ENCODE measurements at regions of chr4 and their contacts with region 1.

Region 1: DNA sequence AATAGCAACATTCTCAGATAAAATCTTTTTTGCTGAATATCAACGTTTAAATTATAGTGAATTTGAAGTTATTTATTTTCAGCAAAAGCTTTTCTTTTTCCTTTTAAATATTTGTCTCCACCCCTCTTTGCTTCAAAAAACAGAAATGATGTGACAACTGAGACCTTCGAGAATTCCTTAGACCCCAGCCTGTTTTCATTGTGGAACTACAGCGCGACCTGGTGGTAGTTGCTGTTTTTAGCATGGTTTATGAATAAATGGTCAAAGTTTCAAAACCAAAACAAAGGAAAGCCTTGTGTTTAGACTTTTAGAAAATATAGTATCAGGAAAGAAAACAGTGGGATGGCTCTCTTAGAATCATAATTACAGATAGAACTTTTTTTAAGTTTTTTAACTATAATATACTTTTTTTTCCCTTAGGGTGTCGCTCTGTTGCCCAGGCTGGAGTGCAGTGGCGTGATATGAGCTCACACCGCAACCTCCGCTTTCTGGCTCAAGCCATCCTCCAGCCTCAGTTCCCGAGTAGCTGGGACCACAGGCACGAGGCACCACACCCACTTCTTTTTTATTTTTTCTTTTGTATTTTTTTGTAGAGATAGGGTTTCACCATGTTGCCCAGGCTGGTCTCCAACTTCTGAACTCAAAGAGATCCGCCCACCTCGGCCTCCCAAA is 26.8 kb upstream of the TMEM184C start:
- DNase-seq: no peak
- H3K4me3 ChIP-seq: no peak overlapping the region
- H3K27ac ChIP-seq: no peak overlapping the region
- H3K4me1 ChIP-seq: peaks cover 0 to 4% (median 0%) of the 10 kb centered on the region in 4 donors
- H3K27me3 ChIP-seq: no peaks in the 10 kb centered on the region
- CTCF ChIP-seq: peak; percentile 40 to 72 (median 64)
- EP300 ChIP-seq: no peak
- POLR2A ChIP-seq: no peak

Region 2: GRCh38 chr4:147103403-147103946 is 486.9 kb before region 1 on chr4:
- intact Hi-C with region 1: loop called (anchors 10 kb)
- DNase-seq: peak; percentile 71
- H3K4me3 ChIP-seq: no peak overlapping the region
- H3K27ac ChIP-seq: peak overlapping the region in 3 of 4 donors; percentile 31 to 68 (median 59)
- H3K4me1 ChIP-seq: peaks cover 0 to 8% (median 7%) of the 10 kb centered on the region in 4 donors
- H3K27me3 ChIP-seq: no peaks in the 10 kb centered on the region
- CTCF ChIP-seq: no peak
- EP300 ChIP-seq: no peak
- POLR2A ChIP-seq: no peak

Region 3: DNA sequence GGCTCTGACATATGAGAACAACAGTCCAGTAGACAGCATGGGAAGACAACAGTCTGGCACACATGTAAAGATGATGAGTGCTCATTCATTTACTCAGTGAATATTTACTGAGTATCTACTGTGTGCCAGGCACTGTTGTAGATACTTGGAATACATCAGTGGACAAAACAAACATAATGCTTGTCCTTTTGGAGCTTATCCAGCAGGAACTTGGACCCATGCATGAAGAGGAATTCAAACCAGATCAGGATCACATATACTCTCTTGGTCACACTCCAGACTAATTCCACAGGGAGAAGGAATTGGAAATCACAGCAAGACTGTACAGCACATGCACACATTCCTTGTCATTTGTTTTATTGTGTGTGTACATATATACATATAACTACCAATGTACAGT is 427.1 kb before region 1 on chr4:
- intact Hi-C with region 1: loop called (anchors 2 kb)
- DNase-seq: no peak
- H3K4me3 ChIP-seq: no peak overlapping the region
- H3K27ac ChIP-seq: no peak overlapping the region
- H3K4me1 ChIP-seq: peaks cover 0 to 3% (median 2%) of the 10 kb centered on the region in 4 donors
- H3K27me3 ChIP-seq: no peaks in the 10 kb centered on the region
- CTCF ChIP-seq: no peak
- EP300 ChIP-seq: no peak
- POLR2A ChIP-seq: no peak

Region 4: GRCh38 chr4:147518846-147519767 is 71.3 kb before region 1 on chr4:
- intact Hi-C with region 1: loop called (anchors 2 kb)
- DNase-seq: no peak
- H3K4me3 ChIP-seq: no peak overlapping the region
- H3K27ac ChIP-seq: no peak overlapping the region
- H3K4me1 ChIP-seq: peaks cover 0 to under 1% (median 0%) of the 10 kb centered on the region in 4 donors
- H3K27me3 ChIP-seq: no peaks in the 10 kb centered on the region
- CTCF ChIP-seq: peak; percentile 11 to 81 (median 62)
- EP300 ChIP-seq: no peak
- POLR2A ChIP-seq: no peak

Region 5: GRCh38 chr4:147550626-147551250 is 39.6 kb before region 1 on chr4:
- intact Hi-C with region 1: no loop called
- DNase-seq: no peak
- H3K4me3 ChIP-seq: peak overlapping the region in 1 of 4 donors; percentile 4
- H3K27ac ChIP-seq: no peak overlapping the region
- H3K4me1 ChIP-seq: peaks cover 0 to 10% (median 3%) of the 10 kb centered on the region in 4 donors
- H3K27me3 ChIP-seq: no peaks in the 10 kb centered on the region
- CTCF ChIP-seq: no peak
- EP300 ChIP-seq: no peak
- POLR2A ChIP-seq: no peak